ENCODE measurements at regions of chr2 and their contacts with region 1.

Region 1: DNA sequence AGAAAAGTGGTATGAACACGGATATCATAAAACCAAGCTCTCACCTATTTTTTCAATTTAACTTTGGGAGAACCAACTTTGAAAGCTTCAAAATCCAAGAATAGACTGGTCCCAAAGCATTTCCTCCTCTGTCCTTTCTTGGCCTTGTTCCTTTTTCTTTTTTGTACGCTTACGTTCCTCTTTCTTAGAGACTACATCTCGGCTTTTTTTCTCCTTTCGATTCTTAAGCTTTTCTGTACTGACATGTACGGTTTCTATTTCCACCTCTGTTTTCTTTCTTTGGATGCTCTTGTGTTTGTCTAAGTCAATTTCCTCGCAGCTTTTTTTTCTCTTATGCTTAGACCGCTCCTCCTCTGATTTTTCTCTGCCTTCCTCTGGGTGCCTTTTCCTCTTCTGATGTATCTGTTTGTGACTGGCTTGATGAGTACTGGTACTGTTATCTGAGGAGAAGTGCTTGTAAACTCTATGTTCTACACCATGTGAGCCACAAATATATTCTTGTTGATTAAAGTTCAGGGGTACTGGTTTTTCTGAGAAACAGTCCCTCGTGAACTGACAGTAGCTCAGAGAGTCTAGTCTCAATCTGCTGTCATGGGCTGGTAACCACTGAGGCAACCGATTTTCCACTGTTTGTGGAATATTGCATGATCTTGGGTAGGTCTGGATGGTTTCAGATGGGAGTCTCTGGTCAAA is 11.5 kb upstream of the RNU2-63P start:
- DNase-seq: no peak
- H3K4me3 Mint-ChIP-seq: peak overlapping the region; percentile 66
- H3K27ac Mint-ChIP-seq: peak overlapping the region; percentile 68
- H3K4me1 Mint-ChIP-seq: peaks cover 12% of the 10 kb centered on the region
- H3K27me3 Mint-ChIP-seq: no peaks in the 10 kb centered on the region

Region 2: GRCh38 chr2:88038263-88039105 is 10.6 kb after region 1 on chr2:
- CTCF ChIA-PET with region 1: no interaction called
- intact Hi-C with region 1: loop called (anchors 2 kb)
- DNase-seq: no peak
- H3K4me3 Mint-ChIP-seq: no peak overlapping the region
- H3K27ac Mint-ChIP-seq: peak overlapping the region; percentile 62
- H3K4me1 Mint-ChIP-seq: peaks cover 42% of the 10 kb centered on the region
- H3K27me3 Mint-ChIP-seq: no peaks in the 10 kb centered on the region

Region 3: GRCh38 chr2:88049622-88050021 is 21.8 kb after region 1 on chr2:
- CTCF ChIA-PET with region 1: no interaction called
- intact Hi-C with region 1: loop called (anchors 2 kb)
- DNase-seq: no peak
- H3K4me3 Mint-ChIP-seq: no peak overlapping the region
- H3K27ac Mint-ChIP-seq: no peak overlapping the region
- H3K4me1 Mint-ChIP-seq: peaks cover 60% of the 10 kb centered on the region
- H3K27me3 Mint-ChIP-seq: no peaks in the 10 kb centered on the region